Thyroid gland (tissue), 4 donors: ENCODE measurements at regions of chr5 and their contacts with region 1.

Region 1: DNA sequence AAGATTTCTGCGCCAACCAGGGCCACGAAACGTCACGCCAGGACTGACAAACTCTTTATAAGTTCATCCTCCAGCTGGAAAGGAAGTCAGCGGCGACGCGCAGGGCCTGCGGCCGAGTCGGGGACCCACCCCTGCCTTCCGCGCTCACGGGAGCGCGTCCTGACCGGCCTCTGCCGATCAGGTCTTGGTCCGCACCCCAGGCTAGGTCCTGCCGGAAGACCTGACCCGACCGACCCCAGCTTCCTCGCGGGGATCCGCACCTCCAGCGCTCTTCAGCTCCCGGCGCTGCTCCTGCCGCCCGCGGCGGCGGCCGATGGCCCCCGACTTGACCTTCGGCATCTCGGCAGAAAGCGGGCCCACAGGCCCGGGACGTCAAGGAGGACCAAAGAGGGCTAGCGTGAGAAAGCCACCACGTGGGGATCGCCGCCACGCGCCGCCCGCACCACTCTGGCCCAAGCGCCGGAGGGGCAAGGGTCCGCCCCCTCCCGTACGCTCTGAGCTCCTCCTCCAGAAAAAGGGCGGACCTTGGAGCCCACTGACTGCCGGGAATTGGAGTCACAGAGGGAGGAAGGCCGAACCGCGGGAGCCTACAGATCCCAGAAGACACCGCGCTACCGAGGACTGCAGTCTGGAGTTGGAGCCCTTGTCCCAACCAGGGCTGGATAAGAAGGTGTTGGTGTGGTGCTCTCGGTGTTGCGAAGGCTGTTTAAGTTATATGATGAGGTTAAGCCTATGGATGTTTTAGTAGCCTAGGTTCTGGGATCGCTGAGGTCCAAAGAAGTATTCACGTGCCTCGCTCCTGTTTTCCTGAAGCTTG is at the start of gene DIMT1:
- DNase-seq: peak; percentile 97
- H3K4me3 ChIP-seq: peak within 1 kb of the TSS; percentile 61 to 89 (median 87)
- H3K27ac ChIP-seq: peak within 1 kb of the TSS; percentile 77 to 92 (median 91)
- H3K4me1 ChIP-seq: peaks cover 8 to 10% of the 10 kb centered on the region in 2 donors
- H3K27me3 ChIP-seq: no peaks in the 10 kb centered on the region
- CTCF ChIP-seq: no peak
- POLR2A ChIP-seq: peak in 1 of 2 donors; percentile 88
- total RNA-seq, gene DIMT1: 20.0 to 36.7 (median 22.0) TPM

Region 2: GRCh38 chr5:62305715-62306322 is 97.8 kb before region 1 on chr5 and contains the start of gene KIF2A:
- intact Hi-C with region 1: loop called (anchors 10 kb)
- DNase-seq: peak; percentile 85 to 88
- H3K4me3 ChIP-seq: peak within 1 kb of the TSS; percentile 21 to 97 (median 70)
- H3K27ac ChIP-seq: peak within 1 kb of the TSS; percentile 49 to 91 (median 81)
- H3K4me1 ChIP-seq: peaks cover 0 to 11% of the 10 kb centered on the region in 2 donors
- H3K27me3 ChIP-seq: no peaks in the 10 kb centered on the region
- CTCF ChIP-seq: peak in 1 of 6 experiments; percentile 3
- POLR2A ChIP-seq: peak in 1 of 2 donors; percentile 69
- total RNA-seq, gene KIF2A: 34.9 to 118 (median 54.8) TPM

Region 3: GRCh38 chr5:62475072-62475471 is 71.4 kb after region 1 on chr5:
- intact Hi-C with region 1: no loop called
- DNase-seq: no peak
- H3K4me3 ChIP-seq: no peak overlapping the region
- H3K27ac ChIP-seq: no peak overlapping the region
- H3K4me1 ChIP-seq: no peaks in the 10 kb centered on the region
- H3K27me3 ChIP-seq: no peaks in the 10 kb centered on the region
- CTCF ChIP-seq: no peak
- POLR2A ChIP-seq: no peak

Region 4: GRCh38 chr5:62547945-62548630 is 144.4 kb after region 1 on chr5:
- intact Hi-C with region 1: no loop called
- DNase-seq: no peak
- H3K4me3 ChIP-seq: no peak overlapping the region
- H3K27ac ChIP-seq: peak overlapping the region in 1 of 3 donors; percentile 15
- H3K4me1 ChIP-seq: peaks cover 0 to 6% of the 10 kb centered on the region in 2 donors
- H3K27me3 ChIP-seq: no peaks in the 10 kb centered on the region
- CTCF ChIP-seq: no peak
- POLR2A ChIP-seq: no peak